Left lung (tissue), 14 donors: ENCODE measurements at regions of chr9 and their contacts with region 1.

Region 1: DNA sequence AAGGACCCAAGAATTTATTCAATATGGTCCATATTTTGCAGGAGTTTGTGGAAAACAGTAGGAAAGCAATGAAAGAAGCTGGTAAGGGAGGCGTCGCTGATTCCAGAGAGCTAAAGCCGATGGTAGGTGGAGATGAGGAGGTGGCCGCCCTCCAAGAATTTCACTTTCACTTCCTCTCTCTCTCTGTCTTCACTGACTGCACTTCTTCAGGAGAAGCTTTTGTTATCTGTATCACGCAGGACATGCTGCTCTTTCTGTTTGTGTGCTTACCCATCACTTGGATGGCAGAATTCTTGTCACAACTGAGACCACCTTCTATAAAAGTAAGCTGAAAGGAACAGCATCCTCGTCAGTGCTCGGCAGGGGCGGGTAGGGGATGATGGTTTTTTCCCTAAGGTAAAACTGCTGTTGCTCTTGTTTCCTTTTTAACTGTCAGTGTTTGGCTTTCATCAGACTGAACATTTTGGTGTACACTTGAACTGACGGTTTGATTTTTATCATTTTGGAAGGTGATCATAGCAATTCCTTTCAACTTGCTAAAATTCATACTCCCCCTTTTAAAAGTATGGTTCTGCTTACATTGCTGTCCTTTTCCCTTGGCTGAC is 62.4 kb upstream of the FSD1L start:
- DNase-seq: no peak
- ATAC-seq: peak; percentile 66
- H3K4me3 ChIP-seq: no peak overlapping the region
- H3K27ac ChIP-seq: no peak overlapping the region
- H3K4me1 ChIP-seq: peaks cover 0 to 3% of the 10 kb centered on the region in 2 donors
- H3K27me3 ChIP-seq: no peaks in the 10 kb centered on the region
- CTCF ChIP-seq: no peak

Region 2: GRCh38 chr9:105259731-105260612 is 125.5 kb before region 1 on chr9:
- intact Hi-C with region 1: loop called in 1 of 2 experiments (anchors 5 kb)
- DNase-seq: no peak
- ATAC-seq: peak; percentile 49
- H3K4me3 ChIP-seq: no peak overlapping the region
- H3K27ac ChIP-seq: peak overlapping the region in 1 of 2 donors; percentile 39
- H3K4me1 ChIP-seq: peaks cover 18 to 52% of the 10 kb centered on the region in 2 donors
- H3K27me3 ChIP-seq: no peaks in the 10 kb centered on the region
- CTCF ChIP-seq: no peak